ENCODE measurements at regions of chr9 and their contacts with region 1.

Region 1: DNA sequence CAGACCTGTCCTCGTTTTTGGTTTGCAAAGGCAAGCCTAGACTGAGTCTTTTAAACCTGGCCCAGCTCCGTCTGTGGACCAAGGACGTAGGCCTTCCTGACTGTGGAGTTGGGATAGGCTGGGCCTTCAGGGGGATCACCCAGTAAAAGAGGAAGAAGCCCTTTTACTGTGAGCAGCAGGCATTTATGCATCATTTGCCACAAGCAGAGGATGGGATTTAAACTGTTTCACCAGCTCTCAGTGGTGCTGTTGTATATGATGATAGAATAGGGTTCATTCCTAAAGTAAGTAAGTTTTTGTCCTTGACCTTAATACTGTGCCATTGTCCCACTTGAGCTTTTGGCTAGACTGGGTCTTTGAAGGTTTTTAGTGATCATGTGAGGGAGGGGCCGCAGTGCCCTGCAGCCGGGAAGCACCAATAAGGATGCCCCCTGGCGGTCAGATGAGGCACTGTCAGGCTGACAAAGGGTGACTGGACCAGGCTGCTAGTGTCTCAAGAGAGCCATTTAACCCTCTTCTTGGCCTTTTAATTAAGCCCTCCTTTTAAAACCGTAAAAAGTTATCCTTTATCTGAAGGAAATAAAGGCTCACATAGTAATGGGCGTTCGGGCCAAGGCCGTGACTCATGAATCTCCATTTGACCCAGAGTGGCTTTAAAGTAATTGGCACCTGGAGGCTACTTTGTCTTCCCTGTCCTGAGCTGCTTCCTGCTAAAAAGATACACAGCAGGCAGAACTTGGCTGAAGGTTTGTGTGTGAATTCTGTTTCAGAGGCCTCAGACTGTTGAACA is 74.0 kb downstream of the UBAP1 start:
- DNase-seq: peak; percentile 64
- H3K4me3 Mint-ChIP-seq: no peak overlapping the region
- H3K27ac Mint-ChIP-seq: peak overlapping the region; percentile 94
- H3K4me1 Mint-ChIP-seq: peaks cover 32% of the 10 kb centered on the region
- H3K27me3 Mint-ChIP-seq: no peaks in the 10 kb centered on the region
- CTCF ChIP-seq: peak; percentile 72

Region 2: GRCh38 chr9:34126207-34127034 is 126.4 kb before region 1 on chr9 and contains the start of gene DCAF12:
- CTCF ChIA-PET with region 1: interaction called, 16 read pairs
- POLR2A ChIA-PET with region 1: interaction called, 51 read pairs
- intact Hi-C with region 1: loop called (anchors 1 kb)
- DNase-seq: peak; percentile 93
- H3K4me3 Mint-ChIP-seq: peak within 1 kb of the TSS; percentile 93
- H3K27ac Mint-ChIP-seq: peak within 1 kb of the TSS; percentile 93
- H3K4me1 Mint-ChIP-seq: peaks cover 40% of the 10 kb centered on the region
- H3K27me3 Mint-ChIP-seq: no peaks in the 10 kb centered on the region
- CTCF ChIP-seq: no peak
- total RNA-seq, gene DCAF12: 39.8 and 44.2 TPM in 2 replicates

Region 3: DNA sequence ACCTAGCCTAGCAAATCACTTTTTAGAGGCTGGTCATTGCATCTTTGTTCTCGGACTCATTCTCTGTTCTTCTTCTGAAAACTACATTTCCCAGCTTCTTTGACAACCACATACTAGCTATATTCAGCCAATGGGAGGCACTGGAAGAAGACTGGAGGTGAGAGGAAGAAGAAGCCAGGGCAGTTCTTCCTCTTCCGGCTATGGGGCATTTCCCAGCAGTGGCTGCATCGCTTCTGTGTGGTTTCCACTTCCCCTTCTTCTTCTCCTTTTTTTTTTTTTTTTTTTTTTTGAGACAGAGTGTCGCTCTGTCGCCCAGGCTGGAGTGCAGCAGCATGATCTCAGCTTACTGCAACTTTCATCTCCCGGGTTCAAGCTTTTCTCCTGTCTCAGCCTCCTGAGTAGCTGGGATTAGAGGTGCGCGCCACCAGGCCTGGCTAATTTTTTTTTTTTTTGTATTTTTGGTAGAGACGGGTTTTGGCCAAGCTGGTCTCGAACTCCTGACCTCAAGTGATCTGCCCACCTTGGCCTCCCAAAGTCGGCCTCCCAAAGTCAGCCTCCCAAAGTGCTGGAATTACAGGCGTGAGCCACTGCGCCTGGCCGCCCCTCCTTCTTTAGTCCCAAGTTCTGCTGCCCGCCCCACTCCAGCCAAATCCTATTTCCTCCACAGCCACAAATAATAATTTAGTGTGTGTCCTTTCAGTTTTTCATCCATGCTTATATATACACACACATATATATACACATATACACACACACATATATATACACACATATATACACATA is 80.9 kb before region 1 on chr9:
- CTCF ChIA-PET with region 1: interaction called, 10 read pairs
- POLR2A ChIA-PET with region 1: interaction called, 4 read pairs
- intact Hi-C with region 1: no loop called
- DNase-seq: no peak
- H3K4me3 Mint-ChIP-seq: no peak overlapping the region
- H3K27ac Mint-ChIP-seq: no peak overlapping the region
- H3K4me1 Mint-ChIP-seq: peaks cover 4% of the 10 kb centered on the region
- H3K27me3 Mint-ChIP-seq: no peaks in the 10 kb centered on the region
- CTCF ChIP-seq: no peak

Region 4: GRCh38 chr9:34203275-34203991 is 49.4 kb before region 1 on chr9:
- CTCF ChIA-PET with region 1: interaction called, 12 read pairs
- POLR2A ChIA-PET with region 1: interaction called, 7 read pairs
- intact Hi-C with region 1: no loop called
- DNase-seq: no peak
- H3K4me3 Mint-ChIP-seq: no peak overlapping the region
- H3K27ac Mint-ChIP-seq: peak overlapping the region; percentile 83
- H3K4me1 Mint-ChIP-seq: peaks cover 35% of the 10 kb centered on the region
- H3K27me3 Mint-ChIP-seq: no peaks in the 10 kb centered on the region
- CTCF ChIP-seq: no peak

Region 5: GRCh38 chr9:34242830-34243229 is 10.0 kb before region 1 on chr9:
- CTCF ChIA-PET with region 1: interaction called, 39 read pairs
- POLR2A ChIA-PET with region 1: interaction called, 6 read pairs
- intact Hi-C with region 1: no loop called
- DNase-seq: no peak
- H3K4me3 Mint-ChIP-seq: no peak overlapping the region
- H3K27ac Mint-ChIP-seq: no peak overlapping the region
- H3K4me1 Mint-ChIP-seq: peaks cover 5% of the 10 kb centered on the region
- H3K27me3 Mint-ChIP-seq: no peaks in the 10 kb centered on the region
- CTCF ChIP-seq: no peak

Region 6: GRCh38 chr9:34291023-34291422 is 38.2 kb after region 1 on chr9:
- CTCF ChIA-PET with region 1: no interaction called
- POLR2A ChIA-PET with region 1: no interaction called
- intact Hi-C with region 1: no loop called
- DNase-seq: no peak
- H3K4me3 Mint-ChIP-seq: no peak overlapping the region
- H3K27ac Mint-ChIP-seq: no peak overlapping the region
- H3K4me1 Mint-ChIP-seq: no peaks in the 10 kb centered on the region
- H3K27me3 Mint-ChIP-seq: no peaks in the 10 kb centered on the region
- CTCF ChIP-seq: no peak

Region 7: DNA sequence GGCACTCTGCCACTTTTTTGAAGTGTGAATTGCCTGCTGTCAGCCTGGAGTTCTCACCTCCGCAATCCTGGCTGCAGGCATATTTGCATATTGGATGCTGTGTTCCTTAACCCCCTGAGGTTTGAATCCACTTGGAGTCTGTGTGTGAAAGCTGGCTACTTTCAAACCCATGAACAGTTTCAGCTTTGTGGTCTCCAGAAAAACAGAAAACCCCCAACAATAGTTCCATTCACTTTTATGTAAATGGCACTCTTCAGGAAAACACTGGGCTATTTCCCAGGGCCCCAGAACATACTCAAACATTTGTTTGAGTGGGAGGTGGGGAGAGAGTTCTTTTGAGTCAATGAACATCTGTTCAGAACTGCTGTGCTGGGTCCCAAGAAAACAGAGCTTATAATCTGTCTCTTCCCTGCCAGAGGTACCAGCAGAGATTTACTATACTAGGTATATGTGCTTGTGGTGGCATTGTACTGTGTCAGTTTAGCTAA is 81.5 kb after region 1 on chr9:
- CTCF ChIA-PET with region 1: interaction called, 12 read pairs
- POLR2A ChIA-PET with region 1: interaction called, 9 read pairs
- intact Hi-C with region 1: loop called (anchors 5 kb)
- DNase-seq: no peak
- H3K4me3 Mint-ChIP-seq: no peak overlapping the region
- H3K27ac Mint-ChIP-seq: no peak overlapping the region
- H3K4me1 Mint-ChIP-seq: peaks cover 19% of the 10 kb centered on the region
- H3K27me3 Mint-ChIP-seq: no peaks in the 10 kb centered on the region
- CTCF ChIP-seq: no peak